ENCODE measurements at regions of chr13 and their contacts with region 1.

Region 1: DNA sequence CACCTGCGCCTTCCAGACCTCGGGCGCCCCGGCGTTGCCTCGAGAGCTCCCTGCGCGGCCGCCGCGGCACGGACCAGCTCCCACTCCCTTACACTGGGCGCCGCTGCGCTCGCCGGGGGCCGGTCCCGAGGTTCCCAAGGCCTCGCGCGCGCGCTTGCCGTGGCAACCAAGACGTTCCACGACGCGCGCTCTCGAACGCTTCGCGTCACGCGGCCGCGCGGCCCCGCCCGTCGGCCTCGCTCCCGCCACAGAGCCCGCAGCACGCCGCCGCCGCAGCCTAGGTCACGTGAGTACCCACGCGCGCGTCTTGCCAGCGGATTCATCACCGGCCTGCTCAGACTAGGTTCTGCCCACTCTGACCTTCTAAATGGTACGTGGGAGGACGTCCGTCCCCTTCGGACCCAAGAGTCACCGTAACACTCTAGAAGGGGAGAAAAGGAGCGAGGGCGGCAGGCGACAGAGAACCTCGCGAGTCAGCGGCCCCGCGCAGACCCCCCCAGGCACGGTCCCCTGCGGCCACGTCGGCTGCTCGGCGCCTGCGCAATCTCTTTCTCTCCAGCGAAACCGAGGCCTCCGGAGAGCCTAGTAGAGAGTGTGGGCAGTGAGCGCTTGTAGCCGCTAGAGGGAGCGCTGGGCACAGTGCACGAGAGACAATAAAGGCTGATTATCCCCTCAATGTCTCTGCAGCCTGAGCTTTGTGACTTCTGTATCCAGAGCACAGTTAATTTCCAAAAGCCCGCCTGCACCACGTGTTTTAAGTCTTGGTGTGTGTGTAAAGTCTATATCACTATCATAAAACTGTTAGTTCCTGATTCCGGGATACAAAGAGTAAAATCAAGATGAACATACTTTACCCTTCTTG is at the start of gene SPART:
- DNase-seq: peak; percentile 91
- H3K4me3 Mint-ChIP-seq: peak within 1 kb of the TSS; percentile 82
- H3K27ac Mint-ChIP-seq: peak within 1 kb of the TSS; percentile 97
- H3K4me1 Mint-ChIP-seq: peaks cover 13% of the 10 kb centered on the region
- H3K27me3 Mint-ChIP-seq: no peaks in the 10 kb centered on the region
- CTCF ChIP-seq: peak; percentile 92
- total RNA-seq, gene SPART: 83.1 and 100.0 TPM in 2 replicates

Region 2: GRCh38 chr13:35684432-35684831 is 662.0 kb before region 1 on chr13:
- CTCF ChIA-PET with region 1: no interaction called
- POLR2A ChIA-PET with region 1: no interaction called
- intact Hi-C with region 1: no loop called
- DNase-seq: no peak
- H3K4me3 Mint-ChIP-seq: no peak overlapping the region
- H3K27ac Mint-ChIP-seq: no peak overlapping the region
- H3K4me1 Mint-ChIP-seq: no peaks in the 10 kb centered on the region
- H3K27me3 Mint-ChIP-seq: no peaks in the 10 kb centered on the region
- CTCF ChIP-seq: no peak

Region 3: DNA sequence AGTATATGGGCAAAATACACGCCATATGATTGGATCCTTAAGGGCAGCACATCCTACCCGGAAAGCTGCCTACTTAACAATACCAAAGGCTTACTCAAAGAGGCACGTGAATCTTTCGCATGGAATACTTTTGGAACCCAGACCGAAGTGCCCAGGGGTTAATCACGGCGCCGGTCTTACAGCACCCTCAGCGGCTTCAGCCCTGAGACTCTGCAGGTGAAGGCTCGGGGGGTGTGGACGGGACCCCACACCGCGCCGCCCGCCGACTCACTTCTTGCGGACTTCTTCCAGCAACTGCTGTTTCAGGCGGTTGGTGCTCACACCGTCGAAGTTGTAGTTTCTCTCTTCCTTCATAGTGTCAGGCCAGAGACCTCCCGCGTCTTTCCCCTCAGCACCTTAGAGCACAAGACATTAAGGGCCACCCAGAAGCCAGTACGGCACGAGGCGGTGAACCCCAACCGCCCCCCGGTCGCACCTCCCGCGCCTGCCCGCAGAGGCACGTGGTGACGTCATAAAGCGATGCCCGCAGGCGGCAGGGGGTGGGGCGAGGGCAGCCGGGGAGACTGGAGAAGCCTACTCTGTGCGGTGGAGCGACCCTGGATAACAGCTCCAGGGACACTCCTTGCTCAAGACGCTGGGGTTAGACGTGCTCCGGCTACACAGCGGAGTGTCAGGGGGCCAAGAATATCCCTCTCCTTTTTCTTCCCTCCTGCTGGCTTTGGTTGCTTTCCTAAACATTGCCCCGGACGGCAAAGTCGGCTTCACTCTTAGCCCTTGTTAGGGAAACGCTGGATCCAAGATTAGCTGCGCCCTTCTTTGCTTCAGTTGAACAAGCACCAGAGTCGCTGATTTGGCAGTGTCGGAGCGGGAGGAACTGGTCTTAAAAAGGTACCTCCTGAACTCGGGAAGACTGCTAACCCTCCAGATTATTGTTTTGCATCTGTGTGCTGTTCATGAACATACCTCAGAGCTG is 48.8 kb before region 1 on chr13 and contains the start of gene CCDC169:
- CTCF ChIA-PET with region 1: interaction called, 4 read pairs
- POLR2A ChIA-PET with region 1: interaction called, 20 read pairs
- intact Hi-C with region 1: loop called (anchors 2 kb)
- DNase-seq: peak; percentile 67
- H3K4me3 Mint-ChIP-seq: peak within 1 kb of the TSS; percentile 87
- H3K27ac Mint-ChIP-seq: peak within 1 kb of the TSS; percentile 76
- H3K4me1 Mint-ChIP-seq: peaks cover 16% of the 10 kb centered on the region
- H3K27me3 Mint-ChIP-seq: no peaks in the 10 kb centered on the region
- CTCF ChIP-seq: no peak
- total RNA-seq, gene CCDC169: 5.7 and 5.9 TPM in 2 replicates

Region 4: GRCh38 chr13:36362251-36362650 is 15.8 kb after region 1 on chr13:
- CTCF ChIA-PET with region 1: interaction called, 6 read pairs
- POLR2A ChIA-PET with region 1: interaction called, 8 read pairs
- intact Hi-C with region 1: loop called (anchors 1 kb)
- DNase-seq: peak; percentile 80
- H3K4me3 Mint-ChIP-seq: no peak overlapping the region
- H3K27ac Mint-ChIP-seq: no peak overlapping the region
- H3K4me1 Mint-ChIP-seq: peaks cover 5% of the 10 kb centered on the region
- H3K27me3 Mint-ChIP-seq: no peaks in the 10 kb centered on the region
- CTCF ChIP-seq: no peak

Region 5: GRCh38 chr13:36420437-36420891 is 74.0 kb after region 1 on chr13:
- CTCF ChIA-PET with region 1: interaction called, 10 read pairs
- POLR2A ChIA-PET with region 1: interaction called, 9 read pairs
- intact Hi-C with region 1: loop called (anchors 5 kb)
- DNase-seq: peak; percentile 85
- H3K4me3 Mint-ChIP-seq: no peak overlapping the region
- H3K27ac Mint-ChIP-seq: peak overlapping the region; percentile 33
- H3K4me1 Mint-ChIP-seq: peaks cover 21% of the 10 kb centered on the region
- H3K27me3 Mint-ChIP-seq: no peaks in the 10 kb centered on the region
- CTCF ChIP-seq: peak; percentile 77

Region 6: DNA sequence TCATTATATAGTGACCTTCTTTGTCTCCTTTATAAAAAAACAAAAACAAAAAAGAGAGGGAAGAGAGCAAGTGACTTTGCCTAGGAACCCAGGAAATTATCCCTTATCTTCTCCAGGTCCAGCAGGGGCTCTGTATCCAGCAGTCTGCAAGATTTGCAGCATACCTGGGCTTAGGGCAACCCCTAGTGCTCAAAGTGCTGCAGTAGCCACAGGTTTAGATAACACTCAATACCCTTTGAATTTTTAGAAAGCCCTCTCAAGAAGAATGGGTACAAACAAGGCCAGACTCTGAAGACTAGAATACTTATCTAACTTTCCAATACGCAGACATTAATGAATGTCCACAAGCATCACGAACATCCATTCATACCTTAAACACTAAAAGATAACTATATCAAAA is 129.0 kb after region 1 on chr13:
- CTCF ChIA-PET with region 1: no interaction called
- POLR2A ChIA-PET with region 1: no interaction called
- intact Hi-C with region 1: loop called (anchors 1 kb)
- DNase-seq: peak; percentile 62
- H3K4me3 Mint-ChIP-seq: no peak overlapping the region
- H3K27ac Mint-ChIP-seq: no peak overlapping the region
- H3K4me1 Mint-ChIP-seq: no peaks in the 10 kb centered on the region
- H3K27me3 Mint-ChIP-seq: peaks cover 15% of the 10 kb centered on the region
- CTCF ChIP-seq: peak; percentile 39

Region 7: GRCh38 chr13:37369616-37370015 is 1023.2 kb after region 1 on chr13:
- CTCF ChIA-PET with region 1: no interaction called
- POLR2A ChIA-PET with region 1: no interaction called
- intact Hi-C with region 1: no loop called
- DNase-seq: no peak
- H3K4me3 Mint-ChIP-seq: no peak overlapping the region
- H3K27ac Mint-ChIP-seq: peak overlapping the region; percentile 30
- H3K4me1 Mint-ChIP-seq: peaks cover 6% of the 10 kb centered on the region
- H3K27me3 Mint-ChIP-seq: no peaks in the 10 kb centered on the region
- CTCF ChIP-seq: no peak